ENCODE measurements at regions of chr12 and their contacts with region 1.

Region 1: DNA sequence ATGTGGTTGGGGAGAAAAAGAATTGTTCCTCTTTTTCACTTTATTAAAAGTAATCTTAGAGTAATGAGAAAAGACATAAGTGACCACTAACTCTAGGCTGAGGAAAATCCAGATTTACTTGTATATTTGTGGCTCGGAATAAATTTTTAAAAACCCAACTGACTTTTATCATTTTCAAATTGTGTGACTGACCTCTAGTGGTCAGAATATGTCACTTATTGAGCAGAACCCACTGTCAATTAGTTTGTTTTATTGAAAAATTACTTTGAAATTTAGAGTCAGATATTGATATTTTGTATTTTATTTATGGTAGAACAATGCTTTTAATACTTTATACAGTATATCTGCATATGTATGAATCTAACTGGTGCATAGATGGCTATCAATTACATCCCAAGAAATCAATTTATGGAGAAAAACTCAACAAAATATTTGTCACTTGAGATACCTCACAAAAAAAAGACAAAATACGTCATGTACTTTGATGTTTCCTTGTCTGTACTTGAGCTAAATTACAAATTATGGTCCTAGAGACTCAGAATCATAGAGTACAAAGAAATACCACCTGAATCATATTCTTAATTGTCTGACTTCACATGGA is 229.4 kb downstream of the CNTN1 start:
- DNase-seq: no peak
- H3K4me3 Mint-ChIP-seq: no peak overlapping the region
- H3K27ac Mint-ChIP-seq: no peak overlapping the region
- H3K4me1 Mint-ChIP-seq: no peaks in the 10 kb centered on the region
- H3K27me3 Mint-ChIP-seq: no peaks in the 10 kb centered on the region

Region 2: GRCh38 chr12:40152783-40153383 is 768.8 kb before region 1 on chr12:
- intact Hi-C with region 1: loop called (anchors 10 kb)
- DNase-seq: no peak
- H3K4me3 Mint-ChIP-seq: no peak overlapping the region
- H3K27ac Mint-ChIP-seq: no peak overlapping the region
- H3K4me1 Mint-ChIP-seq: no peaks in the 10 kb centered on the region
- H3K27me3 Mint-ChIP-seq: peaks cover 38% of the 10 kb centered on the region

Region 3: GRCh38 chr12:40587421-40587820 is 334.2 kb before region 1 on chr12:
- intact Hi-C with region 1: no loop called
- DNase-seq: no peak
- H3K4me3 Mint-ChIP-seq: no peak overlapping the region
- H3K27ac Mint-ChIP-seq: no peak overlapping the region
- H3K4me1 Mint-ChIP-seq: no peaks in the 10 kb centered on the region
- H3K27me3 Mint-ChIP-seq: no peaks in the 10 kb centered on the region

Region 4: DNA sequence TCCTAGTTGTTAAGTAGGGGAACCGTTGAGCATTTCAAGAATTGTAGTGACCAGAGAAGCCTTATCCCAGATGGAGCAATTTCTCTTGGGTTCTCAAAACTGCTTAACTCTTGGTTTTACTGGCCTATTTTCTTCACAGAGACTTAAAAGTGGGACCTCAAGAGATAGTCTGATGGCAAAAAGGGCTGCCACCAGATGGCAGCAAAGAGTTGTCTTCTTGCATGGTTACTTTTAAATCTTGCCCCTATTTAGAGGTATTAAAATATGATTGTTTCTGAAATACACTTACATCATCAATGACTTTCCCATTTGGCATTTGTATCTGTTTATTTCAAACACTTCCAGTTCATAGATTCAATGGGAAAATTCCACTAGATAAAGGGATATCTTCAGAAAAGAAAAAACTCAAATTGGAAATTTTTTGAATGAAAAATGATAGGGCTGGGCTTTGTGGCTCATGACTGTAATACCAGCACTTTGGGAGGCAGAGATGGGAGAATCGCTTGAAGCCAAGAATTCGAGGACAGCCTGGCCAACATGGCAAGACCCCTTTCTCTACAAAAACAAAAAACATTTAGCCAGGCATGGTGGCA is 299.3 kb before region 1 on chr12:
- intact Hi-C with region 1: loop called (anchors 1 kb)
- DNase-seq: no peak
- H3K4me3 Mint-ChIP-seq: no peak overlapping the region
- H3K27ac Mint-ChIP-seq: no peak overlapping the region
- H3K4me1 Mint-ChIP-seq: no peaks in the 10 kb centered on the region
- H3K27me3 Mint-ChIP-seq: no peaks in the 10 kb centered on the region

Region 5: GRCh38 chr12:40655451-40655850 is 266.2 kb before region 1 on chr12:
- intact Hi-C with region 1: no loop called
- DNase-seq: no peak
- H3K4me3 Mint-ChIP-seq: no peak overlapping the region
- H3K27ac Mint-ChIP-seq: no peak overlapping the region
- H3K4me1 Mint-ChIP-seq: no peaks in the 10 kb centered on the region
- H3K27me3 Mint-ChIP-seq: no peaks in the 10 kb centered on the region

Region 6: DNA sequence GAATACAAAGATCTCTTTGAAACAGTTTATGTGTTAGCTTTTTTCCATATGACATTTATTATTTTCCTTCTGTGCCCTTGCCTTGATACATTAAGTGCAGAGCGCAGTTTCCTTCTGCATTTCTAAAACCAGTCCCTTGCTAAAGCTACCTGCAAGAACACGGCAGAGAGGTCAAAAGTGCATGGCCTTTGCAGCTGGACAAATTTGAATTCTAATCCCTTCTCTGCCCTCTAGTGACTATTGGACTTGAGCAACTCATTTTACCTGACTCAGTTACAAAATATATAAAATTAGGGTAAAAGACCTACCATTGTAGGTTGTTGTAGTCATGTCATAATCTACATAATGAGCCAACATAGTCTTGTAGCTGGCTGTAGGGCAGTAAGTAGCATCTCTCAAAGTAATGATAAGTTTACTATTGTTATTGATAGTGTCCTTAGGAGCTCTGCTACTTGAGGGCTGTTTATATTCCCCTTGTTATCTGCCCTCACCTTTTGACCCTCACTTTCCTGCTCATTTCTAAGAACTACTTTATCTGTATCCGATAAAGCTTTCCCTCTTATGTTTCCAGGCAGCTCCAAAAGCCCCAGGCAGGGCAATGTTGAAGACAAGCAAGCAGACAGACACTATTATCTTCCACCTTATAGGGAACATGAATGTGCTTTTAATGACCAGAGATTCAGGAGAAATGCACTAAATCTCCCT is 146.4 kb after region 1 on chr12:
- intact Hi-C with region 1: no loop called
- DNase-seq: no peak
- H3K4me3 Mint-ChIP-seq: no peak overlapping the region
- H3K27ac Mint-ChIP-seq: no peak overlapping the region
- H3K4me1 Mint-ChIP-seq: no peaks in the 10 kb centered on the region
- H3K27me3 Mint-ChIP-seq: no peaks in the 10 kb centered on the region

Measured in activated T-helper 2 cell treated with anti-CD3 and anti-CD28 coated beads, Interferon-gamma antibody, Interleukin-2, Interleukin-4, amounts not matched to agents 10 μg/mL and 5 μg/mL and 100 μg/mL, durations not matched to agents 14 hours and 24 hours and 36 hours (primary cell).